Activated CD4-positive, alpha-beta memory T cell treated with anti-CD3 and anti-CD28 coated beads for 36 hours (primary cell): ENCODE measurements at regions of chr3 and their contacts with region 1.

Region 1: GRCh38 chr3:107271787-107272387 is 105.4 kb upstream of the CCDC54 start:
- DNase-seq: no peak
- H3K4me3 Mint-ChIP-seq: no peak overlapping the region
- H3K27ac Mint-ChIP-seq: no peak overlapping the region
- H3K4me1 Mint-ChIP-seq: no peaks in the 10 kb centered on the region
- H3K27me3 Mint-ChIP-seq: peaks cover 18% of the 10 kb centered on the region

Region 2: DNA sequence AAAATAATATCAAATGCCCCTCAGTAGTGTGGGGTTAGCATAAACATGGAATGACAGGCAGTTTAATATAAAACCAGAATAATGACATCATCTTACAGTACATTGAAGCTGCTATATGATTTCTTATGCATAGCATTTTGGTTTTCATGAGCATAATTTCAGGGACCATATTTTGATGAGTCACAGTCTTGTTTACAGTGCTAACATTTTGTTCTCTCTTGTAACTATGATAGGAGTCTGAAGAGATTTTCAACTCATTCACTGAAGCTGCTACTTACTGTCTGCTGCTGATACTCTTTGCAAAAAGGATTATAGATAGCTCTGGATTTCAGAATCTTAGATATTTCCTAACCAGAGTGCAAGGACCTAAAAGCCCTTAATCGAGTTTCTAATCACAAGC is 12.7 kb after region 1 on chr3:
- CTCF ChIA-PET with region 1: interaction called, 12 read pairs
- POLR2A ChIA-PET with region 1: no interaction called
- intact Hi-C with region 1: no loop called
- DNase-seq: no peak
- H3K4me3 Mint-ChIP-seq: no peak overlapping the region
- H3K27ac Mint-ChIP-seq: no peak overlapping the region
- H3K4me1 Mint-ChIP-seq: no peaks in the 10 kb centered on the region
- H3K27me3 Mint-ChIP-seq: peaks cover 13% of the 10 kb centered on the region

Region 3: DNA sequence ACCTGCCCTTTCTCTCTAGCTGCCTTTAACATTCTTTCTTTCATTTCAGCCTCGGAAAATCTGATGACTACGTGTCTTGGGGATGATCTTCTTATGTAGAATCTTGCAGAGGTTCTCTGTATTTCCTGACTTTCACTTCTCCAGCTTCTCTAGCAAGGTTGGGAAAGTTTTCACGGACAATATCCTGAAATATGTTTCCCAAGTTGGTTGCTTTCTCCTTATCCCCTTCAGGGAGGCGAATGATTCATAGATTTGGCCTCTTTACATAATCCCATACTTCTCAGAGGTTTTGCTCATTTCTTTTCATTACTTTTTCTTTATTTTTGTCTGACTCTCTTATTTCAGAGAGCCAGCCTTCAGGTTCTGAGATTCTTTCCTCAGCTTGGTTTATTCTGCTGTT is 43.3 kb after region 1 on chr3:
- CTCF ChIA-PET with region 1: no interaction called
- POLR2A ChIA-PET with region 1: no interaction called
- intact Hi-C with region 1: no loop called
- DNase-seq: no peak
- H3K4me3 Mint-ChIP-seq: no peak overlapping the region
- H3K27ac Mint-ChIP-seq: no peak overlapping the region
- H3K4me1 Mint-ChIP-seq: no peaks in the 10 kb centered on the region
- H3K27me3 Mint-ChIP-seq: peaks cover 12% of the 10 kb centered on the region

Region 4: DNA sequence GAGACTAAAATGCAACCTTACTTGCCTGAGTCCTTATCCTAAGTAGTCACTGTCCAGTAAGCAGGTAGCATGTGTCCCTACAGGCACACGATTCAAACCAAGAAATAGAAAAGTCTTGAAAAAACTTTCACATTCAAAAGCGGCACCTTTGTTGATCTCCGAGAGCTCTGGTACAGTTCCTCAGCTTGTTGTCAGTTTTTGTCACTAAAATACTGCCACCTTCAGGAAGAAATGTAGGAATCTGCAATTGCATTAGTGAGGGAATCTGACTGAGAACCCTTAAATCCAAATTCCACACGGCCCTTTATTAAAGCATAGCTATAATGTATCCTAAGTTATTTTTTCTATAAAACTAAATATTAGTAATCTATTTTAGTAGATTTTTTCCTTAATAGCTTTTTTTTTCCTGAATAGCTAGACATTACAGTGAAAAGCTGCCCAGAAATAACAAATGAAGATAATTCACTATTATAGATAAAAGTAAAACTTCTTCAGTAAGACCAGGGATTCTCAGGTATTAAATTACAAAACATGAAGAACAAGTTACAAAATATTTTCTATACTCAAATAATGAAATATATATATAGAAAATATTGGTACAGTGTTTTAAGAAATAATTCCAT is 149.4 kb after region 1 on chr3:
- CTCF ChIA-PET with region 1: interaction called, 59 read pairs
- POLR2A ChIA-PET with region 1: no interaction called
- intact Hi-C with region 1: loop called (anchors 1 kb)
- DNase-seq: no peak
- H3K4me3 Mint-ChIP-seq: no peak overlapping the region
- H3K27ac Mint-ChIP-seq: no peak overlapping the region
- H3K4me1 Mint-ChIP-seq: peaks cover 3% of the 10 kb centered on the region
- H3K27me3 Mint-ChIP-seq: peaks cover 4% of the 10 kb centered on the region

Region 5: GRCh38 chr3:107429320-107430181 is 157.7 kb after region 1 on chr3:
- CTCF ChIA-PET with region 1: interaction called, 39 read pairs
- POLR2A ChIA-PET with region 1: no interaction called
- intact Hi-C with region 1: loop called (anchors 2 kb)
- DNase-seq: peak; percentile 71
- H3K4me3 Mint-ChIP-seq: peak overlapping the region; percentile 62
- H3K27ac Mint-ChIP-seq: no peak overlapping the region
- H3K4me1 Mint-ChIP-seq: peaks cover 12% of the 10 kb centered on the region
- H3K27me3 Mint-ChIP-seq: peaks cover 3% of the 10 kb centered on the region